ENCODE measurements at regions of chr18 and their contacts with region 1.

Region 1: DNA sequence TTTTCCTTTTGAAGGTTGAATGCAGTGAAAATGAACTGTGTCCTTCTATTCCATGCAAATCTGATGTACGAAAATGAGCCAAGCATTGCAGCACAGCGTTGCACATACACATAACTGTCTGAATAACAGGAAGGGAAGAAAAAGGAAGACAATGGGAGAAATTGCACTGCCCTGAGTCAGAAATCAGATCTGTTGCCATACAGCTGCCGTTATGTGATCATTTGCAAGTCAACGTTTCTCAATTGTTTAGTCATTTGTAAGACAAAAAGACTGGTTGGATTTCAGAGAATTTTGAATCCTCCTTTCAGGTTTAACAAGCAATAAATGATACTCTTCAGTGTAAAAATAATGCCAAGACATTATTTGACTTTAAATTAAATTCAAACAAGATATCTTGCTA is 284.1 kb downstream of the DSEL start:
- DNase-seq: no peak
- H3K4me3 ChIP-seq: no peak overlapping the region
- H3K27ac ChIP-seq: no peak overlapping the region
- H3K4me1 ChIP-seq: no peaks in the 10 kb centered on the region
- H3K27me3 ChIP-seq: no peaks in the 10 kb centered on the region
- CTCF ChIP-seq: no peak
- POLR2A ChIP-seq: no peak

Region 2: GRCh38 chr18:68596016-68596415 is 1363.6 kb after region 1 on chr18:
- intact Hi-C with region 1: loop called (anchors 5 kb)
- DNase-seq: no peak
- H3K4me3 ChIP-seq: no peak overlapping the region
- H3K27ac ChIP-seq: no peak overlapping the region
- H3K4me1 ChIP-seq: no peaks in the 10 kb centered on the region
- H3K27me3 ChIP-seq: no peaks in the 10 kb centered on the region
- CTCF ChIP-seq: no peak
- POLR2A ChIP-seq: no peak